Stomach (tissue), 19 donors: ENCODE measurements at regions of chr14 and their contacts with region 1.

Region 1: GRCh38 chr14:57486767-57487379 is 6.8 kb downstream of the CCDC198 start:
- DNase-seq: peak in 1 of 2 donors; percentile 78
- H3K4me3 ChIP-seq: no peak overlapping the region
- H3K27ac ChIP-seq: no peak overlapping the region
- H3K4me1 ChIP-seq: peaks cover 0 to 5% (median 0%) of the 10 kb centered on the region in 4 donors
- H3K27me3 ChIP-seq: no peaks in the 10 kb centered on the region
- CTCF ChIP-seq: peak in 4 of 7 experiments; percentile 17 to 48 (median 35)
- EP300 ChIP-seq: no peak
- POLR2A ChIP-seq: no peak

Region 2: GRCh38 chr14:58072288-58073071 is 585.6 kb after region 1 on chr14:
- intact Hi-C with region 1: loop called (anchors 5 kb)
- DNase-seq: peak; percentile 33 to 88
- H3K4me3 ChIP-seq: peak overlapping the region in 3 of 4 donors; percentile 22 to 32 (median 29)
- H3K27ac ChIP-seq: no peak overlapping the region
- H3K4me1 ChIP-seq: peaks cover 0 to 14% (median 6%) of the 10 kb centered on the region in 4 donors
- H3K27me3 ChIP-seq: no peaks in the 10 kb centered on the region
- CTCF ChIP-seq: peak in 5 of 7 experiments; percentile 52 to 68 (median 66)
- EP300 ChIP-seq: no peak
- POLR2A ChIP-seq: no peak

Region 3: GRCh38 chr14:58280954-58281787 is 794.3 kb after region 1 on chr14:
- intact Hi-C with region 1: no loop called
- DNase-seq: peak in 1 of 2 donors; percentile 76
- H3K4me3 ChIP-seq: no peak overlapping the region
- H3K27ac ChIP-seq: peak overlapping the region in 4 of 5 donors; percentile 67 to 79 (median 74)
- H3K4me1 ChIP-seq: peaks cover 25 to 62% (median 46%) of the 10 kb centered on the region in 4 donors
- H3K27me3 ChIP-seq: no peaks in the 10 kb centered on the region
- CTCF ChIP-seq: no peak
- EP300 ChIP-seq: no peak
- POLR2A ChIP-seq: no peak